ENCODE measurements at regions of chr1 and their contacts with region 1.

Region 1: GRCh38 chr1:61157468-61157987 is 75.2 kb downstream of the NFIA start:
- DNase-seq: peak; percentile 64
- H3K4me3 ChIP-seq: no peak overlapping the region
- H3K27me3 ChIP-seq: no peaks in the 10 kb centered on the region
- CTCF ChIP-seq: no peak

Region 2: DNA sequence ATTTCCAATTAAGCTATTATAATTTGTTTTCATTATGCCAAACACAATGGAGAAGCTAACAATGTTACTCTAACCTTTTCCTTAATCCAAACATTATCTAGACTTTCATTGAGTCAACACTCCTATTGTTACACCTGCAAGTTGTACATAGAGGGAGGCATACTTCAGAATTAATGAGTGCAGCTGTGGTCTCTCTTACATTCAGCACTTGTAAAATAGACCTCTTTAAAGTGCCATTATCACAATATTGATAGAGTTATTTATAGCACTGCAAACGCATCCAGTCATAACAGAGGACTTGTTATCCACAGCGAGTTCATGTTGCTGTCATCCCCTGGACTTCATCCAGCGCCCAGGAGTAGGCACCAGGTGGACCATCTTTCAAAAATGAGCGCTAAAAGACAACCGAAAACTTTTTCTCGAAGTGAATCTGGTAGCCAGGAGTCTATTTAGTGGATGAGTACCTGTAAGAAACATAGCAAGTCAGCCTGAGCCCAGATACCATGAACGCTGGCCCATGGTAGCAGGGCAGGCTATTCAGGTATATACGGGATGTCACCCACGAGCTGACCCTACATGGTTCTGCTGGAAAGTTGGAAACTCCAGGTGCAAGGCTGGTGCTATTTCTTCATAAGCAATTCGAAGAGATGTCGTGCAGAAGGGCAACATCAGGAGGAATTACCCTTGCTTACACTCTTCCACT is 145.8 kb before region 1 on chr1:
- CTCF ChIA-PET with region 1: no interaction called
- POLR2A ChIA-PET with region 1: no interaction called
- DNase-seq: no peak
- H3K4me3 ChIP-seq: no peak overlapping the region
- H3K27me3 ChIP-seq: no peaks in the 10 kb centered on the region; the same call in none of the 2 replicates
- CTCF ChIP-seq: no peak

Region 3: GRCh38 chr1:61124696-61125095 is 32.8 kb before region 1 on chr1:
- CTCF ChIA-PET with region 1: no interaction called
- POLR2A ChIA-PET with region 1: no interaction called
- DNase-seq: no peak
- H3K4me3 ChIP-seq: no peak overlapping the region
- H3K27me3 ChIP-seq: no peaks in the 10 kb centered on the region
- CTCF ChIP-seq: no peak

Region 4: GRCh38 chr1:61141288-61142042 is 16.1 kb before region 1 on chr1:
- CTCF ChIA-PET with region 1: interaction called, 13 read pairs
- POLR2A ChIA-PET with region 1: interaction called, 4 read pairs
- DNase-seq: no peak
- H3K4me3 ChIP-seq: no peak overlapping the region
- H3K27me3 ChIP-seq: no peaks in the 10 kb centered on the region
- CTCF ChIP-seq: no peak